ENCODE measurements at regions of chr2 and their contacts with region 1.

Region 1: GRCh38 chr2:64144057-64145013 is at the start of gene PELI1:
- DNase-seq: peak; percentile 97
- H3K4me3 Mint-ChIP-seq: peak within 1 kb of the TSS; percentile 99
- H3K27ac Mint-ChIP-seq: peak within 1 kb of the TSS; percentile 96
- H3K4me1 Mint-ChIP-seq: peaks cover 19% of the 10 kb centered on the region
- H3K27me3 Mint-ChIP-seq: no peaks in the 10 kb centered on the region
- total RNA-seq, gene PELI1: 31.9 and 33.8 TPM in 2 replicates

Region 2: DNA sequence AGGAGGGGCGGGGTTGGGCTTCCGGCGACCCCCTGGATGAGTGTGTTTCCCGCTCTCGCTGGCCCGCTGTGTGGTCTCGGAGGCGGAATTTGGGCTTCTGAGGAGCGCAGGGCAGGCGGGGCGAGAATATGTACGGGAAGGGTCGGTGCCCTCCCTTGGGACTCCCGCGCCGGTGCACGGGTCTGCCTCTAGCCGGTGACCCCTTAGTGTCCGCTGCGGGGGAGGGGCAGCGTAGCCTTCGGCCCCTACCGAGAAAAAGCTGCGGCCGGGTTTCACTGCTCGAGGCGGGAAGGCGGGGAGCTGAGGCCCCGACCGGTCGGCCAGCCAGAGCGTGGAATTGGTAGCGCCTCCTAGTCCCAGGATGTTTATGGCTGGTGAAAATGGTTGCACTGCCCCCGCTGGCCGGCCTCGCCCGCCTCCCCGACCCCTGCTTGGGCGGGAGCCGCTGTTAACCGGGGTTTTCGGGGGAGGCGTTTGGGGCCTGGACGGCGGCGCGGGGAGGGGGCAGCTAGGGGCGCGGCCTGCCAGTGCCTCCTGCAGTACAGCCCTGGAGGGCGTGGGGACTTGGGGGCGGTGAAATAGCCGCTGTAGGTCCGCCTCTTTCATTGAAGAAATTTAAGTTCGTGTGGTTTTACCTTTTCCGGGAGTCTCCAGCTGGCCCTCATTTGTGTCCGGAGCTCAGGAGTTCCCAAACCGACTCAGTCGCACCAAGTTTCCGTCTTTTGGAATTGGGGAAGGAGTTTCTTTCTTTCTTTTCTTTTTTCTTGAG is 302.9 kb before region 1 on chr2 and contains the start of gene UGP2:
- intact Hi-C with region 1: loop called (anchors 5 kb)
- DNase-seq: peak; percentile 96
- H3K4me3 Mint-ChIP-seq: peak within 1 kb of the TSS; percentile 96
- H3K27ac Mint-ChIP-seq: peak within 1 kb of the TSS; percentile 100
- H3K4me1 Mint-ChIP-seq: peaks cover 48% of the 10 kb centered on the region
- H3K27me3 Mint-ChIP-seq: peaks cover 3% of the 10 kb centered on the region
- total RNA-seq, gene UGP2: 66.3 and 66.5 TPM in 2 replicates

Region 3: DNA sequence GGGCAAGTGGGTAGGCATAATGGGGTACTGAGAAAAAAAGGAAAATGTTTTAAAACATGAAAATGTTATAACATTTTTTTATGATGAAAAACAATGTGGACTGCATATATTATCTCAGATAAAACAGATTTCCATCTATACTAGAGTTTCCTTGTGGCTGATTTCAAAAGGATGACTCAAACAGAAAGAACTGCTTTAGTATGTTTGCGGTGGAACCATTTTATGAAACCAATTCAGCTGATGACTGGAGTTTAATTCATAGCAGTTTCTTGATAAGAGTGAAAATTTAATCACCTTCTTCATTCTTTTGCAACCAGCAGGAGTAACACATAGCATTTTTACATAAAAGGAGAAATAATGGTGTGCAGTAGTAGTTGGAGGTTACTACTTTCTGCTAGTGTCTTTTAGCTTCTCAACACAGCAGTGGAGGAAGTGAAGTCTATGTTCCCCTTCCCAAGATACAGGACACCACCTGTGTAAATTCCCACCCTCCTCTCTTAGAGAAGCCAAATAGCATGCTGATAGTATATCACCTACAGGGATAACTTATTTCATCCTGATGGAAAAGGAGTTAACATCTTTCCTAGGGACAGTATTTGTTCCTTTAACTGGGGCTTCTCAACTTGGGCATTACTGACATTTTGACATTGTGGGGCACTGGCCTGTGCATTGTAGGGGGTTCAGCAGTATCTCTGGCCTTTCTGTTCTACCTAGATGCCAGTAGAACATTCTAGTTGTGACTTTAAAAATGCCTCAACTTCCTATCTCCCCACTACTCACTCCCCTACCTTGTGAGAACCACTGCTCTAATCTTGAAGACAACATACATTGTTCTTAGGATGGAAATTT is 30.0 kb before region 1 on chr2:
- intact Hi-C with region 1: loop called (anchors 1 kb)
- DNase-seq: peak; percentile 74
- H3K4me3 Mint-ChIP-seq: peak overlapping the region; percentile 66
- H3K27ac Mint-ChIP-seq: peak overlapping the region; percentile 86
- H3K4me1 Mint-ChIP-seq: peaks cover 50% of the 10 kb centered on the region
- H3K27me3 Mint-ChIP-seq: no peaks in the 10 kb centered on the region

Region 4: GRCh38 chr2:64203858-64204632 is 59.7 kb after region 1 on chr2:
- intact Hi-C with region 1: loop called (anchors 2 kb)
- DNase-seq: peak; percentile 84
- H3K4me3 Mint-ChIP-seq: peak overlapping the region; percentile 75
- H3K27ac Mint-ChIP-seq: peak overlapping the region; percentile 75
- H3K4me1 Mint-ChIP-seq: peaks cover 71% of the 10 kb centered on the region
- H3K27me3 Mint-ChIP-seq: no peaks in the 10 kb centered on the region

Region 5: DNA sequence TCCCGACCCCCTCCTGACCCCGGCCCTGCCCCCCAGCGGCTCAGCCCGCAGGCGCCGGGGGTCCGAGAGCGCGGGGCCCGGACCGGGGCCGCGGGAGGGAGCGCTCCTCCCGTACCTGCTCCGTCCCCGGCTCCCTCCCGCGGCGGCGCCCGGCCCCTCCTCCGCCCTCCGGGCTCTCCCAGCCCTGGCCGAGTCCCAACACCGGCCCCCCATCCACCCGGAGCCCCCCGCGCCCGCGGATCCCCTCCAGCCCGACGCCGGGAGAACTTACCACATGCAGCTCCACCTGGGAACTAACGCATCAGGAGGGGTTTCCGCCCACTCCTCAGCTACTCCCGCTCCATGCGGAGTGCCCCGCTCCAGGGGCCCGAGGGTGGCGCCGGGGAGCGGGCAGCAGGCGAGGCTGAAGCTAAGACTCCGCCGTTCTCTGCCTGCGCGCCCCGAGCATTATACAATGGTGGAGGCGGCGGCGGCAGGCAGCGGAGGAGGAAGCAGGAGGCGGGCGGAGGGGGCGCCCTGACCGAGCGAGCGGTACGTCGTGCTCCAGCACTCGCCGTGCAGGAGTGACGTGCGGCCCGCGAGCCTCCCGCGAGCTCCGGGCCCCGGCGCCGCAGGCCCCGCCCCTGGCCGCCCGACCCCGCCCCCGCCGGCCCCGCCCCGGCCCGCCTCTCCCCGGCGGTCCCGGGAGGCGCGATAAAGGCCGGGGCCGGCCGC is 509.2 kb after region 1 on chr2 and contains the start of gene SERTAD2:
- intact Hi-C with region 1: loop called (anchors 5 kb)
- DNase-seq: peak; percentile 96
- H3K4me3 Mint-ChIP-seq: peak within 1 kb of the TSS; percentile 95
- H3K27ac Mint-ChIP-seq: peak within 1 kb of the TSS; percentile 92
- H3K4me1 Mint-ChIP-seq: peaks cover 65% of the 10 kb centered on the region
- H3K27me3 Mint-ChIP-seq: no peaks in the 10 kb centered on the region
- total RNA-seq, gene SERTAD2: 24.6 and 26.7 TPM in 2 replicates